Posterior vena cava (tissue), 2 donors: ENCODE measurements at regions of chr18 and their contacts with region 1.

Region 1: GRCh38 chr18:59623456-59624368 is 73.5 kb downstream of the CCBE1 start:
- DNase-seq: no peak

Region 2: DNA sequence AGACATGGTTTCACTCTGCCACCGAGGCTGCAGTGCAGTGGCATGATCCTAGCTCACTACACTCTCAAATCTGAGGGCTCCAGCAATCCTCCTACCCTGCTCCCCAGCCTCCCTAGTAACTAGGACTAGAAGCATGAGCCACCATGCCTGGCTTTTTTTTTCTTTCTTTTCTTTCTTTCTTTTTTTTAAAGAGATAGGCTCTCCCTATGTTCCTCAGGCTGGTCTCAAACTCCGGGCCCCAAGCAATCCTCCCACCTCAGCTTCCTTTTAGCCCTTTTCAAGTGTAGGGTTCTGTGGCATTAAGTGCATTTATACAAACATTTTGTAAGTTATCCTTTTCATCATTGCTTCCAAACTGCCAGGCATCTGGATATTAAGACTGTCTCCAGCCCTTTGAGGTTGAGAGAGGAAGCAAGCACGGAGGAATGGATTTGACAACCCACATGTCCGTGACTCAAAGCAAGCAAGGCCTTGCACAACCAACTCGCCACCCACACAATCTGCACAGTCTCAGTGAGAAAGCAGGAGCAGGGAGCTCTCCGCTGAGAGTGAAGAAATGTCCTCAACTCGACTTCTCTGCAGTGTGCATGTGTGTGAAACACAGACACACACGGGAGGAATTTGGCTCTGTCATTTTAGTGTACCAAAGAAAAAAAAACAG is 1886.2 kb before region 1 on chr18:
- intact Hi-C with region 1: no loop called
- DNase-seq: peak; percentile 93

Region 3: GRCh38 chr18:59697236-59697932 is 73.7 kb after region 1 on chr18 and contains the start of gene CCBE1:
- intact Hi-C with region 1: loop called in 1 of 2 experiments (anchors 10 kb)
- DNase-seq: peak; percentile 85
- total RNA-seq, gene CCBE1: 2.1 to 3.0 TPM

Region 4: DNA sequence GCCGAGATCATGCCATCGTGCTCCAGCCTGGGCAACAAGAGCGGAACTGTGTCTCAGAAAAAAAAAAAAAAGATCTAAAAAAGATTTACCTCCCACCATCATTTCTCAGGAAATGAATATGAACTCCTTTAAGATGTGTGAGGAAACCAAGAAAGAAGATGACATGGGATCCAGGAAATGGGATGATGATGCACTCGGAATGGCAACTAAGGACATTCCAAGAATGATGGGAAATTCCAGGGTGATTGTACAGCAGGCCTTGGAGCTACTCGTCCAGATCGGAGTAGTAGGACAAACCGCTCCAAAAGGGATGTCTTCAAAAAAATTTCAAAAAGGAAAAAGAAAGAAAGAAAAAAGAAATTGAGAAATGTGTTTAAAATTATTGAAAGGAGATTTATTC is 191.2 kb after region 1 on chr18:
- intact Hi-C with region 1: loop called in 1 of 2 experiments (anchors 10 kb)
- DNase-seq: no peak